ENCODE measurements at regions of chr22 and their contacts with region 1.

Region 1: DNA sequence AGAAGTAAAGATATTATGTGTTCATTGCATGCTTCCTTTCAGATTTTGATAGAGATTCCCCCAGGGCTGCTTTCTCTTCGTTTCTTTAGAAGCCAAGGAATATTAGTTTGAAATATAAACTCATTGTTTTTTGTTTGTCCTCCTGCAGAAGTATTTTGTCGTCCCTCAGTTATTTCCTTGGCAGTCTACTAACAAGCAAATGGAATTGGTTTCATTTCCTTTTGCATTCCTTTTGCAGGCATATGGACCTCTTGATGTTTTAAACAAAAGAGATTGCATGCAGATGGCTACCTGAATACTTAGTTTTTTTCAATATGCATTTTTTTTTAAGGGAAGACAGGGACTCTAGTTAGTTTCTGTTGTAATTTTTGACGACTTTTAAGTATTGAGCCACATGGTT is 62.2 kb downstream of the BCL2L13 start:
- DNase-seq: no peak
- H3K4me3 Mint-ChIP-seq: no peak overlapping the region
- H3K27ac Mint-ChIP-seq: no peak overlapping the region
- H3K4me1 Mint-ChIP-seq: peaks cover 1% of the 10 kb centered on the region
- H3K27me3 Mint-ChIP-seq: no peaks in the 10 kb centered on the region
- CTCF ChIP-seq: no peak

Region 2: GRCh38 chr22:17628304-17629166 is 72.2 kb before region 1 on chr22 and contains the start of gene ATP6V1E1:
- CTCF ChIA-PET with region 1: no interaction called
- intact Hi-C with region 1: loop called (anchors 5 kb)
- DNase-seq: peak; percentile 96
- H3K4me3 Mint-ChIP-seq: peak within 1 kb of the TSS; percentile 89
- H3K27ac Mint-ChIP-seq: peak within 1 kb of the TSS; percentile 99
- H3K4me1 Mint-ChIP-seq: peaks cover 9% of the 10 kb centered on the region
- H3K27me3 Mint-ChIP-seq: no peaks in the 10 kb centered on the region
- CTCF ChIP-seq: no peak
- total RNA-seq, gene ATP6V1E1: 105 and 116 TPM in 2 replicates